ENCODE measurements at regions of chr14 and their contacts with region 1.

Region 1: DNA sequence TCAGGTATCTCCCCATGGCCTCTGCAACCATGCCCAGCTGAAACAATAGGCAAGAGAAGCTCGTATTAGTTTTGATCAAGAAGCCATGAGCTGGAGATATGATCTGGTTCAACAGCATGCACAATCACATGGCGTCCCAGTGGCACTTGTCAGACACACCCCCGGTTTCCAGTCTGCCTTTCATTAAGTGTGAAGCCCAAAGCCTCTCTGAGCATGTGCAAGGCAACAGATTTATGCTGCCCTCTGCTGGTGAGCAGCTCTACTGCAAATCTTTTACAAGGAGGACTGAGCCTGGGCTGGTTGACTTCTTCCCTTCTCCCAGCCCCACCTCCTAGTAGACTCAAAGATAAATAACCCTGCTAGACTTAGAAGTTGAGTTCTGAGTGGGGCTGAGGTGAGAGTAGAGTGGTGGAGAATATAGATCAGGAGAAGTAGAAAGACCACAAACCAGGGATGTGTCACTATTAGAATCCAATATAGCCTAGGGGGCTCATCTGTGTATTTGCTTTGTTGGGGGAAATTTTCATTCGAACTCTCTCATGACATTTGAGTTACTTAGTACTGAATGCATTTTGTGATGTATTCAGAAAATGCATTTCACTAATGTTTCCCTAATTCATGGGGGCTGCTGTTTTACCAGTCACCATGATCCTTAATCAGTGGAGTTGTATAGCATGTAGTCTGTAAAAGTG is 53.7 kb upstream of the MBIP start:
- DNase-seq: peak; percentile 86
- H3K4me3 Mint-ChIP-seq: no peak overlapping the region
- H3K27ac Mint-ChIP-seq: no peak overlapping the region
- H3K4me1 Mint-ChIP-seq: no peaks in the 10 kb centered on the region
- H3K27me3 Mint-ChIP-seq: no peaks in the 10 kb centered on the region
- CTCF ChIP-seq: peak; percentile 85

Region 2: GRCh38 chr14:35883677-35884293 is 490.3 kb before region 1 on chr14:
- CTCF ChIA-PET with region 1: interaction called, 43 read pairs
- POLR2A ChIA-PET with region 1: no interaction called
- intact Hi-C with region 1: loop called (anchors 1 kb)
- DNase-seq: peak; percentile 41
- H3K4me3 Mint-ChIP-seq: no peak overlapping the region
- H3K27ac Mint-ChIP-seq: no peak overlapping the region
- H3K4me1 Mint-ChIP-seq: peaks cover 14% of the 10 kb centered on the region
- H3K27me3 Mint-ChIP-seq: no peaks in the 10 kb centered on the region
- CTCF ChIP-seq: peak; percentile 66

Region 3: DNA sequence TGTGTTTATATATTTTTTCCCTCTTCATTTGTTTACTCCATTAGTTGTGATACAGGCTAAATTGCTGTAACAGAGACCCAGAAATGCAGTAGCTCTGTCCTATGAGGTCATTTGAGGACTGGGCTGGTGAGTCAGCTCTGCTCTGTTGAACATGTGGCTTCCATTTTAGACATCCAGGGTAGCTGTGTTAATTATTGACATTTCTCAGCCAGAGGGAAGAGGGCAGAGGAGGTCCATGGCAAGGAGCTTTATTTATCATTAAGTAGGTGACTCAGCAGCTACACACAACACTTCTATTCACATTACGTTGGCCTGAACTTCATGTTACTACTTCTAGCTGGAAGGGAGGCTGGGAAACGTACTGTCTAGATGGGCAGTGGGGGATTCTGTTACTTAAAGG is 283.0 kb before region 1 on chr14:
- CTCF ChIA-PET with region 1: interaction called, 13 read pairs
- POLR2A ChIA-PET with region 1: no interaction called
- intact Hi-C with region 1: no loop called
- DNase-seq: peak; percentile 68
- H3K4me3 Mint-ChIP-seq: no peak overlapping the region
- H3K27ac Mint-ChIP-seq: no peak overlapping the region
- H3K4me1 Mint-ChIP-seq: peaks cover 12% of the 10 kb centered on the region
- H3K27me3 Mint-ChIP-seq: no peaks in the 10 kb centered on the region
- CTCF ChIP-seq: no peak

Region 4: GRCh38 chr14:36207500-36207899 is 166.6 kb before region 1 on chr14:
- CTCF ChIA-PET with region 1: interaction called, 16 read pairs
- POLR2A ChIA-PET with region 1: no interaction called
- intact Hi-C with region 1: loop called (anchors 1 kb)
- DNase-seq: peak; percentile 22
- H3K4me3 Mint-ChIP-seq: no peak overlapping the region
- H3K27ac Mint-ChIP-seq: no peak overlapping the region
- H3K4me1 Mint-ChIP-seq: no peaks in the 10 kb centered on the region
- H3K27me3 Mint-ChIP-seq: no peaks in the 10 kb centered on the region
- CTCF ChIP-seq: peak; percentile 48

Region 5: GRCh38 chr14:36361210-36361853 is 12.8 kb before region 1 on chr14:
- CTCF ChIA-PET with region 1: interaction called, 19 read pairs
- POLR2A ChIA-PET with region 1: no interaction called
- intact Hi-C with region 1: no loop called
- DNase-seq: no peak
- H3K4me3 Mint-ChIP-seq: no peak overlapping the region
- H3K27ac Mint-ChIP-seq: no peak overlapping the region
- H3K4me1 Mint-ChIP-seq: no peaks in the 10 kb centered on the region
- H3K27me3 Mint-ChIP-seq: no peaks in the 10 kb centered on the region
- CTCF ChIP-seq: no peak

Measured in MCF 10A (cell line).